Astrocyte of the cerebellum (primary cell): ENCODE measurements at regions of chr5 and their contacts with region 1.

Region 1: GRCh38 chr5:16600397-16600796 is 16.4 kb downstream of the RETREG1 start:
- DNase-seq: no peak
- H3K4me3 ChIP-seq: no peak overlapping the region
- CTCF ChIP-seq: no peak

Region 2: GRCh38 chr5:16552666-16553343 is 47.6 kb before region 1 on chr5:
- in situ Hi-C with region 1: no loop called
- DNase-seq: peak; percentile 50
- H3K4me3 ChIP-seq: no peak overlapping the region
- CTCF ChIP-seq: peak; percentile 96

Region 3: DNA sequence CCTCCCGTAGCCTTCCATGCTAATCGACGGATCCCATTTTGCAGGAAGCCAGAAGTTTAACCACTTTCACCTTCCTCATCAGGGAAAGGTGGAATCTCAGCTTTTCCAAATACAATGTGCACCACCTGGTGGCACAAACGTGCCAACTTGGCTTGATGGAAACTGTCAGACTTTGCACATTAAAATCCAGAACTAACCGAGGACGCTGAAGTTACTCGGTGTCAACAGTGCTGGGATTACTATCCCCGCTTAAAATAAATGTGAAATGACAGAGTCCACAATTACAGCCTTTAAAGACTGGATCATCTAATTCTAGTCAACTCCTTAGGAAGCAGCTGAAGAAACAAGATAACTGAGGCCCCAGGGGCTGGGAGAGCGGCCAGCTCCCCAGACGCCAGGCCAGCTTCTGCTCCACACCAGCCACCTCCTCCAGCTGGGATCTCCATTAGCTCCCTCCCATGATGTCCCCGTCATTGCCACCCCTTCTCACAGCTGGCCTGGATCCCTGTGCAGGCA is 66.5 kb after region 1 on chr5:
- in situ Hi-C with region 1: loop called (anchors 10 kb)
- DNase-seq: peak; percentile 3
- H3K4me3 ChIP-seq: no peak overlapping the region
- CTCF ChIP-seq: peak; percentile 47